ENCODE measurements at regions of chr15 and their contacts with region 1.

Region 1: DNA sequence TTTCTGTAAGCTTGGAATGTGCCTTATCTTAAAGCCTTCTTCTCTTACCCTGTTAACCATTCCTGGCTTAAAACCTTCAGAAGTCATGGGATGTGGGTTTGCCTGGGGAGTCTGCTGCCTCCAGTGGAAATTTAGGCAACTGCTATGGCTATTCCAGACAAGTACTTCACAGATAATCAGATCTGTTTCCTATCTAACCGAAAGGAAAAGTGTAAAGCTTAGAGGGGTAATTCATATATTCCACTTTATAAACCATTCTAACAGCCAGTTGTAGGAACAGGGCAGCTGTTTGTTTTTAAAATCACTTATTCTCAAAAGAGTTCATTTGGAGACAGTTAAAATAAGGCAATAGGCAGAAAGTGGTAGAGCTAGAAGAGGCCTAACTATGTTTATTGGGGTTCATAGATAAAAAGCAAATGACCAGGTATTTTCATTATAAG is 219.9 kb downstream of the TCF12 start:
- DNase-seq: peak; percentile 44 to 65 (median 54)
- ATAC-seq: peak; percentile 96
- H3K4me3 ChIP-seq: no peak overlapping the region
- H3K27ac ChIP-seq: no peak overlapping the region
- H3K4me1 ChIP-seq: peaks cover 0 to 5% of the 10 kb centered on the region in 2 experiments; a peak in 2 of 5 replicates
- H3K27me3 ChIP-seq: no peaks in the 10 kb centered on the region
- CTCF ChIP-seq: peak; percentile 58 to 77 (median 69)
- EP300 ChIP-seq: no peak
- POLR2A ChIP-seq: no peak
- RAD21 ChIP-seq: peak; percentile 34 to 57; a peak in 2 of 4 replicates

Region 2: GRCh38 chr15:57017024-57017423 is 121.3 kb before region 1 on chr15:
- CTCF ChIA-PET with region 1: no interaction called
- POLR2A ChIA-PET with region 1: no interaction called
- in situ Hi-C with region 1: no loop called
- intact Hi-C with region 1: loop called (anchors 5 kb)
- DNase-seq: peak in 1 of 4 experiments; percentile 16
- ATAC-seq: peak; percentile 56; the same call in 1 of the 3 replicates
- H3K4me3 ChIP-seq: no peak overlapping the region
- H3K27ac ChIP-seq: no peak overlapping the region
- H3K4me1 ChIP-seq: peaks cover 0 to 3% of the 10 kb centered on the region in 2 experiments; a peak in 2 of 5 replicates
- H3K27me3 ChIP-seq: no peaks in the 10 kb centered on the region
- CTCF ChIP-seq: peak in 1 of 3 experiments; percentile 48; a peak in 2 of 6 replicates
- EP300 ChIP-seq: no peak
- POLR2A ChIP-seq: no peak
- RAD21 ChIP-seq: peak; percentile 28 to 45

Region 3: DNA sequence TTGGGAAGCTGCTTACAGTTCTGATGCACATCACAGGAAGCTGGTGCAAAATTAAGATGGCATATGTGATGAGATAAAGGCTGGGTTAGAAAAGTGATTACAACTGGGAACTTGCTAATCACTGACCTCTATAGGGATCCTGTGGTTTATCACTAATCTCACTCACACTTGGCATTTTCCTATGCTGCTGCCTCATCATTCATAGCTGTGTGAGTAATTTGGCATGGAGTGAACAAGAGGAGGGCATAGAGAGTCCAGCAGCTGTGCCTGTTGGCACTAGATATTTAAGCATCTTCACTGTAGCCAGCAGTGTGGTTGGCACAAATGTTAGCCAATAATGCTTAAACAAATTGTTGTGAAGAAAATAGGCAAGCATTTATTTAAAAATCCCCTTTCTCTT is 20.2 kb after region 1 on chr15:
- CTCF ChIA-PET with region 1: no interaction called
- POLR2A ChIA-PET with region 1: no interaction called
- in situ Hi-C with region 1: no loop called
- intact Hi-C with region 1: no loop called
- DNase-seq: no peak
- ATAC-seq: no peak
- H3K4me3 ChIP-seq: no peak overlapping the region
- H3K27ac ChIP-seq: no peak overlapping the region
- H3K4me1 ChIP-seq: no peaks in the 10 kb centered on the region
- H3K27me3 ChIP-seq: no peaks in the 10 kb centered on the region
- CTCF ChIP-seq: no peak
- EP300 ChIP-seq: no peak
- POLR2A ChIP-seq: no peak
- RAD21 ChIP-seq: no peak

Region 4: DNA sequence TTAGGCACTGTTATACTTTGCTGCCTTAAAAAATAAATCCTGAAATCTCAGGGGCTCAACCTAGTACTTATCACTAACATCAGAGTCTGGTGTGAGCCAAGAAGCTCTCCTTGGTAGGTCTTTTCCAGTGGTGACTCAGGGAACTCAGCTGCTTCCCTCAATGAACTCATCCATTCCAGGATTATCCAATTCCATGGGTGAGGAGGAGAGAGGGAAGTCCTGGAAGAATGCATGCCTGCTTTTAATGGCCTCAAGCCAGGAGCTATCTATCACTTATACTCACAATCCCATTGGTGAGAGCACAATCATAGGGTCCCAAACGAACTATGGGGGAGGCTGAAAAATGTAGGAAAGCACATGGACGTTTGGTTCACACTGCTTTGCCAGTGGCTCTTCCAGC is 681.8 kb after region 1 on chr15:
- CTCF ChIA-PET with region 1: no interaction called
- POLR2A ChIA-PET with region 1: no interaction called
- in situ Hi-C with region 1: no loop called
- intact Hi-C with region 1: no loop called
- DNase-seq: no peak
- ATAC-seq: no peak
- H3K4me3 ChIP-seq: no peak overlapping the region
- H3K27ac ChIP-seq: no peak overlapping the region
- H3K4me1 ChIP-seq: no peaks in the 10 kb centered on the region
- H3K27me3 ChIP-seq: peaks cover 16 to 21% of the 10 kb centered on the region in 2 experiments; a peak in 4 of 5 replicates
- CTCF ChIP-seq: no peak
- EP300 ChIP-seq: no peak
- POLR2A ChIP-seq: no peak
- RAD21 ChIP-seq: no peak